ENCODE measurements at regions of chr2 and their contacts with region 1.

Region 1: GRCh38 chr2:45085487-45085886 is 76.2 kb upstream of the SIX2 start:
- DNase-seq: no peak
- H3K4me3 Mint-ChIP-seq: no peak overlapping the region
- H3K27ac Mint-ChIP-seq: no peak overlapping the region
- H3K4me1 Mint-ChIP-seq: no peaks in the 10 kb centered on the region
- H3K27me3 Mint-ChIP-seq: no peaks in the 10 kb centered on the region

Region 2: DNA sequence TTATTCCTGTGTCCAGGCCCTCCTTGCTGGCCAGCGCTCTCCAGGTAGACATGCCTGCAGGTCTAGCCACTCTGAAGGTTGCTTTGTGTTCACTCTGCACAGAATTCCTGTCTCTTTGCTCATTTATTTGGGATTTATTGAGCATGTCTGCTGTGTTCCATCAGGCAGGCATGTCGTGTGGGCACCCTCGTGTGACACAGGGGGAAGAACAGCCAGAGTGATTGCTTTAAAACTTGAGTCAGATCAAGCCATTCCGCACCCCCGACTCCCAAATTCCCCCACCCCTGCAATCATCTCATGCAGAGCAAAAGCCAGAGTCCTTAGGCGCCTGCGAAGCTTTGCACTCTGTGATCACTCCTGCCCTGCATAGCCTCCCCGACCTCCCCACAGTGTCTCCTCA is 31.5 kb before region 1 on chr2:
- intact Hi-C with region 1: loop called (anchors 5 kb)
- DNase-seq: no peak
- H3K4me3 Mint-ChIP-seq: no peak overlapping the region
- H3K27ac Mint-ChIP-seq: no peak overlapping the region
- H3K4me1 Mint-ChIP-seq: no peaks in the 10 kb centered on the region
- H3K27me3 Mint-ChIP-seq: no peaks in the 10 kb centered on the region